GM23248 (cell line): ENCODE measurements at regions of chr16 and their contacts with region 1.

Region 1: DNA sequence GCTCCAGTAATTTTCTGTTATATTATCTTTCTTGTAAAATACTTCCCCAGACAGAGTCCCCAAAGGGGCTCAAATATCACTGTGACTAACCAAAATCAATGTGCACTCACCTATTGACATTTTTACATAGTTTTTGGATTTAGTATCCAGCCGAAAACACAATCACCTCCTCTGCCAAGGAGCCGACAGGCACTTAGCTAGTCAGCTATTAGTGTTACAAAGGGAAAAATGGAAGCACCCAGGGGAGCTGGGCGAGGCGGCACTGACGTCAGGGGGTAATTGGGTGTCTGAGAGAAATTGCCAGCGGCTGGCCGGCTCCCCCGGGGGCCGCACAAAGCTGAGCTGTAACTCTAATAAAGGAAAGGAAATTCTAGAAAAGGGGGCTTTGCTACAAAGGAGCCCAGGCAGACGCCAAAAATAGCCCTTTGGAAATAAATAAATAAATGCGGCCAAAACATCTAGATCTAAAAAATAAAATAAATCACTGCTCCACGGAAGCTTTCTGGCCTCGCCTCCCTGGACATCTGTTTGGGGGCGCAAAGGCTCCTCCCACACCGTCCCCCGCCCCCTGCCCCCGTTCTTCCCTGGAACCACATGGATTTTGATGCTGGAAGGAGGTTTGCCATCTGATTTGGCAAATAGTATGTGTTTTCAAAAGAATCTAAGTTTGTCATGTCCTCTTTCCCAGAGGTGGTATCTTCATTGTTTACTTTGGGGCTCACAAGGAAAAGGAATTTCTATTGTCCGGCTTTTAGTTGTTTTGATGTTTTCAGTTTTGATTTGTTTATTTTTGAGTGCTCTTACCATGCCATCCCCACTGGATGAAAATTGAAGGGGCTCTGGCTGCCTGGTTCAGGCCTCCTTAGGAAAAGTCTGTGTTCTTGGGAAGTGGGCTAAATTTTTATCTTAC is 156.7 kb downstream of the ZNF423 start:
- DNase-seq: no peak
- H3K4me3 ChIP-seq: no peak overlapping the region
- H3K27ac ChIP-seq: no peak overlapping the region
- H3K4me1 ChIP-seq: 0 out of 2 replicates have a peak, but pooled peaks cover 3% of the 10 kb centered on the region
- H3K27me3 ChIP-seq: peaks cover 13% of the 10 kb centered on the region

Region 2: DNA sequence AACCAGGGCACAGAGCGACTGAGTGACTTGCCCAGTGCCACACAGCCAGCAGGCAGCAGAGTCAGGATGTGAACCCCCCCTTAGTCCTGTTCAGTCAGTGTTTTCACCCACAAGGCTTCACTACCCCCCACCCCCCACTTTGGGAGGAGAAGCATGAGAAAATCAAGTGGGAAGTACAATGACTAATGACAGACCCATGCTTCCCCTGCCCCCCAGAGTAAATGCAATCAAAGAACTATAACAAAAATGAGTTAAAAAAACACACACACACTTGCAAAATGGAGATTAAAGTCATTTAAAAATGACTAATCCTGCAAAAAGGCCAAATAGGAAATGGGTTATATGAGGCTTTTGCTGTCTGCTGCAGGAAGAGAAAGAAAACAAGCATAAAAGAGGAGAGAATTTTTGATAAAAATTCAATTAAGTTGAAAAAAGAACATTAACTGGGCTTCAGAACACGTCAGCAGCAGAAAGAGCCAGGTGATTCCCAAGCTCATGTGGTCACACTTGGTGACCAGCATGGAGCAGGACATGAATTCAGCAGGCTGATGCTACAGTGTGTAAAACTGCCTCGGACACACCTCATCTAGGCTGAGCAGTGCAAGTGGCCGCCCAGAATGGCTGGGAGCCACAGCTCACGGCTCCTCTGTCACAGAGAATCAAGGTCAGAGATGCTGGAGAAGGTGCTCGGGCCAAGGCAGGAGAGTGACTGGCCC is 55.6 kb before region 1 on chr16:
- in situ Hi-C with region 1: no loop called
- DNase-seq: peak; percentile 81
- H3K4me3 ChIP-seq: peak overlapping the region; percentile 18
- H3K27ac ChIP-seq: peak overlapping the region; percentile 71
- H3K4me1 ChIP-seq: peaks cover 15% of the 10 kb centered on the region
- H3K27me3 ChIP-seq: no peaks in the 10 kb centered on the region

Region 3: GRCh38 chr16:49755313-49755620 is 56.1 kb after region 1 on chr16:
- in situ Hi-C with region 1: loop called (anchors 10 kb)
- DNase-seq: peak; percentile 69
- H3K4me3 ChIP-seq: peak overlapping the region; percentile 67
- H3K27ac ChIP-seq: no peak overlapping the region
- H3K4me1 ChIP-seq: no peaks in the 10 kb centered on the region; the same call in 1 of the 2 replicates
- H3K27me3 ChIP-seq: no peaks in the 10 kb centered on the region

Region 4: GRCh38 chr16:49921791-49922456 is 222.7 kb after region 1 on chr16:
- in situ Hi-C with region 1: no loop called
- DNase-seq: peak; percentile 54
- H3K4me3 ChIP-seq: no peak overlapping the region
- H3K27ac ChIP-seq: no peak overlapping the region
- H3K4me1 ChIP-seq: no peaks in the 10 kb centered on the region
- H3K27me3 ChIP-seq: peaks cover 6% of the 10 kb centered on the region; the same call in 1 of the 2 replicates

Region 5: GRCh38 chr16:49952386-49952785 is 253.2 kb after region 1 on chr16:
- in situ Hi-C with region 1: no loop called
- DNase-seq: no peak
- H3K4me3 ChIP-seq: no peak overlapping the region
- H3K27ac ChIP-seq: no peak overlapping the region
- H3K4me1 ChIP-seq: no peaks in the 10 kb centered on the region
- H3K27me3 ChIP-seq: no peaks in the 10 kb centered on the region

Region 6: GRCh38 chr16:50821586-50821985 is 1122.4 kb after region 1 on chr16:
- in situ Hi-C with region 1: no loop called
- DNase-seq: peak; percentile 40
- H3K4me3 ChIP-seq: no peak overlapping the region
- H3K27ac ChIP-seq: no peak overlapping the region
- H3K4me1 ChIP-seq: no peaks in the 10 kb centered on the region
- H3K27me3 ChIP-seq: no peaks in the 10 kb centered on the region